ENCODE measurements at regions of chr1 and their contacts with region 1.

Region 1: DNA sequence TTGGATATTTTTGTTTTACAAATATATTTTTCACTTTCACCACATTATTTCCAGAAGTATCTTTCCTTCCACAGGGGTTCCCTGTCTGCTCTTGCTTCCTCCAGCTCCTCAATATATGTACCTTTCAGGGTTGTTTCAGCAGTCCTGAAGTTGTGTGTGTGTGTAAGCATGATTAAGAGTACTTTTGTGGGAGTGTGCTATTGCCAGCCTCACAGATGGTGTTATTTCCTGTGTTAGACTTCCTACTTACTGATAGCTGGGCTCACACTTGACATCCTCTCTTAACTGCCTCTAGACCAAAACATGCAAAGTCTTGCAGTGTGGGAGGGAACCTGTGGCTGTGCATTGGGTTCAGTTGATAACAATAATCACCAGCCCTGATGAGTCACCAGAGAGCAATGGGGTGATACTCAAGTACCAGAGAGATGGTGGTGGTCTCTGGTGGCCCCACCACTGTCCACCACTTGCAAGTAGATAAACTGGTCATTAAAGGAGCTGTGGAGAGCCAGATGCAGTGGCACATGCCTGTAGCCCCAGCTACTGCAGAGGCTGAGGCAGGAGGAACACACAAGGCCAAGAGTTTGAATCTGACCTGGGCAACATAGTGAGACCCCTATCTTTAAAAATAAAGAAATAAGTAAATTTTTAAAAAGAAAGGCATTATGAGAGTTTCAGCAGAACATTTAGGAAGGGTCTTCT is 126.7 kb downstream of the NR5A2 start:
- DNase-seq: peak; percentile 88
- ATAC-seq: peak; percentile 89
- H3K4me3 ChIP-seq: no peak overlapping the region
- H3K27ac ChIP-seq: peak overlapping the region; percentile 77
- H3K4me1 ChIP-seq: peaks cover 41% of the 10 kb centered on the region
- H3K27me3 ChIP-seq: no peaks in the 10 kb centered on the region
- CTCF ChIP-seq: no peak
- EP300 ChIP-seq: peak; percentile 83 to 86
- POLR2A ChIP-seq: no peak
- RAD21 ChIP-seq: 0 out of 2 replicates have a peak, but pooled peaks have one; percentile 13

Region 2: DNA sequence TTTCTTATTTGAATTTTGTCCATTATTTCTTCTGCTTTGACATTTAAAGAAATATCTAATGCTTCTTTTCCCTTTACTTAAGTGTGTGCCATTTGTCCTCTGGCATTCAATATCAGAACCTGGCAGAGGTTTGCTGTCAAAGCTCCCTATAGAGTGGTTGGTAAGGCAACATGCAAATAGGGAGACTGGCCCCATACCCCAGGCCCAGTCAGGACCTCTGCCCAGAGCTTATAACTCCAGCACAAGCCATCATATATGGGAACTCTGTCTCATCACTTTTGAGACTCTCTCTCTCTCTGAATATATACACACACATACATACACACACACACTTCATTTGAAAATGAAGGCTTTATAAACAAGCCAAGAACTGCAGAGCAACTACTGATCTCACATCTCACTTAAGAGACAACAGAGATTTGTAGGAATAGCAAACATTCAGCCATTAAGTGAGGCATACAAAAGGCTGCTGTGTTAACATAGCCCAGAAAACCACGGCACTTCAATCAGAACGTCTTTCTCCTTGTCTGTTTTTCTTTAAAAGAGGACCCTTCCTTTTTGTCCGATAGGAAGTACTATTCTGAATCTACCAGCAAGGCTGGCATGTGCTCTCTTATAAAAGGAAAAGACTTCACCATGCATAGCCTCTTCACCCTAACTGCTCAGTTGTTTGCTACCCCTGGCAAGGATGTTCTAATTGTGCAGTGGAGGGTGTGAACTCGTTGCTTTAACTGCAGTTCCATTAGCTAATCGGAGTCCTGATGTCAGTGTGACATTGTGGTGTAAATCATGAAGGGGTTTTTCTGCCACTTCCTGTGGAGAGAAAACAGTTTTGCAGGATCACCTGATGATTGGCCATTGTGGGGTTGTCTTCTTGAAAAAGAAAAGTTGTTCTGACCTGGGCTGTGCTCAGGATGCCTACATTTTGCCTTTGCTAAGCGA is 25.0 kb before region 1 on chr1:
- CTCF ChIA-PET with region 1: interaction called, 4 read pairs
- POLR2A ChIA-PET with region 1: interaction called, 3 read pairs
- RAD21 ChIA-PET with region 1: interaction called, 27 read pairs
- SMC1A ChIA-PET with region 1: interaction called, 19 read pairs
- in situ Hi-C with region 1: no loop called
- intact Hi-C with region 1: no loop called
- DNase-seq: no peak
- ATAC-seq: peak; percentile 90
- H3K4me3 ChIP-seq: no peak overlapping the region
- H3K27ac ChIP-seq: no peak overlapping the region
- H3K4me1 ChIP-seq: peaks cover 6% of the 10 kb centered on the region
- H3K27me3 ChIP-seq: no peaks in the 10 kb centered on the region
- CTCF ChIP-seq: no peak
- EP300 ChIP-seq: peak; percentile 65 to 75; a peak in 2 of 4 replicates
- POLR2A ChIP-seq: no peak
- RAD21 ChIP-seq: no peak

Region 3: DNA sequence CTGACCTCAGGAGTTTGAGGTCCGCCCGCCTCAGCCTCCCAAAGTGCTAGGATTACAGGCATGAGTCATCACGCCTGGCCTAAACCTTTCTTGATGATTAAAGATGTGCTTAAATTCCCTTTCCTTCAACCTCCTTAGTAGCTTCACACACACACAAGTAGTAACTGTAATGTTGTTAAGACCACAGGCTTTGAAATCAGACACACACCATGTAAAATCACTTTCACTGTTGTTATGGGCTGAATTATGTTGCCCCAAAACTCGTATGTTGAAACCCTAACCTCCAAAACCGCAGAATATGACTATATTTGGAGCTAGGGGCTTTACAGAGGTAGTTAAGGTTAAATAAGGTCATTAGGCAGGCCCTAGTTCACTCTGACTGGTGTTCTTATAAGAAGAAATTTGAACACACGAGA is 53.5 kb after region 1 on chr1:
- CTCF ChIA-PET with region 1: interaction called, 4 read pairs
- POLR2A ChIA-PET with region 1: no interaction called
- RAD21 ChIA-PET with region 1: interaction called, 7 read pairs
- SMC1A ChIA-PET with region 1: interaction called, 9 read pairs
- in situ Hi-C with region 1: no loop called
- intact Hi-C with region 1: loop called (anchors 5 kb)
- DNase-seq: peak; percentile 77
- ATAC-seq: peak; percentile 97
- H3K4me3 ChIP-seq: no peak overlapping the region
- H3K27ac ChIP-seq: no peak overlapping the region
- H3K4me1 ChIP-seq: peaks cover 7% of the 10 kb centered on the region
- H3K27me3 ChIP-seq: no peaks in the 10 kb centered on the region
- CTCF ChIP-seq: no peak
- EP300 ChIP-seq: peak; percentile 68 to 82; a peak in 3 of 4 replicates
- POLR2A ChIP-seq: no peak
- RAD21 ChIP-seq: 0 out of 2 replicates have a peak, but pooled peaks have one; percentile 1

Measured in GM12878 (cell line).